IMR-90 (cell line): ENCODE measurements at regions of chr1 and their contacts with region 1.

Region 1: GRCh38 chr1:9960706-9961562 is 17.7 kb downstream of the NMNAT1 start:
- DNase-seq: no peak
- ATAC-seq: no peak
- H3K4me3 ChIP-seq: no peak overlapping the region
- H3K27ac ChIP-seq: no peak overlapping the region
- H3K4me1 ChIP-seq: peaks cover 2% of the 10 kb centered on the region; the same call in 1 of the 2 replicates
- H3K27me3 ChIP-seq: no peaks in the 10 kb centered on the region
- CTCF ChIP-seq: no peak
- POLR2A ChIP-seq: no peak
- RAD21 ChIP-seq: no peak

Region 2: GRCh38 chr1:10001016-10001665 is 40.2 kb after region 1 on chr1:
- CTCF ChIA-PET with region 1: no interaction called
- POLR2A ChIA-PET with region 1: no interaction called
- dilution Hi-C with region 1: no loop called
- in situ Hi-C with region 1: no loop called
- intact Hi-C with region 1: no loop called
- DNase-seq: no peak
- ATAC-seq: no peak
- H3K4me3 ChIP-seq: no peak overlapping the region
- H3K27ac ChIP-seq: no peak overlapping the region
- H3K4me1 ChIP-seq: no peaks in the 10 kb centered on the region
- H3K27me3 ChIP-seq: peaks cover 27% of the 10 kb centered on the region
- CTCF ChIP-seq: no peak
- POLR2A ChIP-seq: no peak
- RAD21 ChIP-seq: no peak

Region 3: GRCh38 chr1:10128101-10128765 is 167.3 kb after region 1 on chr1:
- CTCF ChIA-PET with region 1: no interaction called
- POLR2A ChIA-PET with region 1: no interaction called
- dilution Hi-C with region 1: no loop called
- in situ Hi-C with region 1: loop called (anchors 25 kb)
- intact Hi-C with region 1: no loop called
- DNase-seq: no peak
- ATAC-seq: no peak
- H3K4me3 ChIP-seq: no peak overlapping the region
- H3K27ac ChIP-seq: no peak overlapping the region
- H3K4me1 ChIP-seq: no peaks in the 10 kb centered on the region
- H3K27me3 ChIP-seq: no peaks in the 10 kb centered on the region
- CTCF ChIP-seq: no peak
- POLR2A ChIP-seq: no peak
- RAD21 ChIP-seq: no peak